ENCODE measurements at regions of chr4 and their contacts with region 1.

Region 1: GRCh38 chr4:107757864-107758476 is 37.9 kb upstream of the PAPSS1 start:
- DNase-seq: no peak
- H3K4me3 ChIP-seq: no peak overlapping the region
- H3K27ac ChIP-seq: no peak overlapping the region
- H3K4me1 ChIP-seq: no peaks in the 10 kb centered on the region; a peak in 1 of 7 replicates
- H3K27me3 ChIP-seq: no peaks in the 10 kb centered on the region
- CTCF ChIP-seq: no peak; a peak in 1 of 4 replicates
- EP300 ChIP-seq: no peak
- POLR2A ChIP-seq: no peak
- RAD21 ChIP-seq: peak in 1 of 2 experiments; percentile 28; a peak in 3 of 4 replicates

Region 2: DNA sequence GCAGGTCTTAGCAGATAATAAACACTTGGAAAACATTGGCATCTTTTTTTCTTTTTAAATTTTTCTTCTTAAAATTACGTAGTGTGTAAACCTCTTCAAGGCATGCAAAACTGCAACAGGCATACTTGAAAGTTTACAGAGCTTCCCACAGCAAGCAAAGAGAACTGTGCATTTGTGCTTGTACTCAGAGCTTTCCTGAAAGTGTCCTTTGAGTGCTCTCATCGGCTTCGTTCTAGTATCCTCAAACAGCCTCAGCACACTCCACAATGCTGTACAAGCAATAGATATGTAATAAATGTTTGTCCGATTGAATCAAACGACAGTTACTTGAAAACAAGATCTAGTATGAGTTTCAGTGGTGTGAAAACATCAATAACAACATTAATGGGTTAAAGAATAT is 265.4 kb before region 1 on chr4:
- CTCF ChIA-PET with region 1: no interaction called
- POLR2A ChIA-PET with region 1: no interaction called
- DNase-seq: no peak
- H3K4me3 ChIP-seq: no peak overlapping the region
- H3K27ac ChIP-seq: no peak overlapping the region
- H3K4me1 ChIP-seq: no peaks in the 10 kb centered on the region
- H3K27me3 ChIP-seq: no peaks in the 10 kb centered on the region
- CTCF ChIP-seq: no peak
- EP300 ChIP-seq: no peak
- POLR2A ChIP-seq: no peak
- RAD21 ChIP-seq: no peak

Region 3: DNA sequence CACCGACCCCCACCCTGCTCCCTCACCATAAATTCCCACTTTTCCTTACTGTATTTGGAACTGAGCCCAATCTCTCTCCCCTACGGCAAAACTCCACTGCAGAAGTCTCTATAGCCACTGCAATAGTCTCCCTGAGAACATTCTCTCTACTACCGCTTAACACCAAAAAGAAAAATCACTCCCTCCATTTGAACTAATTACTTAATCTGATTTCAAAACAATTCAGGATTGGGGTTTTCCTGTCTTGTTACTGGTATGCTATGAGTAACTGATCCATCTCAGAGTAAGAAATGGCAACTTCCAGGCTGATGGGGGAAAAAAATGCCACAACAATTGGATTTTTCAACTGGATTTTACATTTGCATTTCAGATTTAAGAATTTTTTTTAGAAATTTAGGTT is 43.7 kb before region 1 on chr4:
- CTCF ChIA-PET with region 1: no interaction called
- POLR2A ChIA-PET with region 1: no interaction called
- DNase-seq: no peak
- H3K4me3 ChIP-seq: no peak overlapping the region
- H3K27ac ChIP-seq: no peak overlapping the region
- H3K4me1 ChIP-seq: peaks cover 3 to 15% (median 6%) of the 10 kb centered on the region in 4 experiments; a peak in 6 of 7 replicates
- H3K27me3 ChIP-seq: no peaks in the 10 kb centered on the region
- CTCF ChIP-seq: no peak
- EP300 ChIP-seq: no peak
- POLR2A ChIP-seq: no peak
- RAD21 ChIP-seq: no peak

Region 4: DNA sequence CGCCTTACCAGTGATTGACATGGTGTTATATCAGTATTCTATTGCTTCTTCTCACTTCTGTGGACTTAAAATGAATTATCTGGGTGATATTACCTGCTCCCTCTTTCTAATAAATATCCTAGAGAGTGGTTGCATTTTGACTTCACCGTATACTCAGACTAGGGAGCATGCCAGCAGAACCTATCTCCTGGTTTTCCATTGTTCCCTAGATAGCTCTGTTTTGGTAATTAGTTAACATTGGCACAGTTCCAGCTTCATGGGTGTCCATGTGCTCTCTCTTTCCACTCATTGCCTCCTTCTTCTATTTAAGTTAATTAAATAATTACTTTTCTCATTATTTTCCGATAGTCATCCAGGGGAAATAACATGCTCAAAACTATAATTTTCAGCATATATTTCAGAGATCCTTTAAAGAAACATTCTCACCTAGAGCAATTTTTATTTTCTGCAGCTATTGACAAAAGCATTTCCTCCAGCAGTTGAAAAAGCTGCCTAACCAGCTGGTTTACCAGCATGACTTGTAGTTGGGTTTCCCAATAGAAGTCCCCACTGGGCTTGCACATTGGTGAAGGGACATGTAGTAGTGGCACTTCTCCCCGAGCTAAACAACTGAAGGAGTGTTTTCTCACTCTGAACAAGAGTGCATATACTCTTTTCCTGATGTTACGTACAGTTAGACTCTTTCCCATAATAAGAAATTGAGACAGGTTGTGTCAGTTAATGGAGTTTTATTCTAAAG is 10.1 kb before region 1 on chr4:
- CTCF ChIA-PET with region 1: interaction called, 17 read pairs
- POLR2A ChIA-PET with region 1: no interaction called
- DNase-seq: no peak
- H3K4me3 ChIP-seq: no peak overlapping the region
- H3K27ac ChIP-seq: no peak overlapping the region
- H3K4me1 ChIP-seq: no peaks in the 10 kb centered on the region
- H3K27me3 ChIP-seq: no peaks in the 10 kb centered on the region
- CTCF ChIP-seq: no peak
- EP300 ChIP-seq: no peak
- POLR2A ChIP-seq: no peak
- RAD21 ChIP-seq: no peak

Region 5: DNA sequence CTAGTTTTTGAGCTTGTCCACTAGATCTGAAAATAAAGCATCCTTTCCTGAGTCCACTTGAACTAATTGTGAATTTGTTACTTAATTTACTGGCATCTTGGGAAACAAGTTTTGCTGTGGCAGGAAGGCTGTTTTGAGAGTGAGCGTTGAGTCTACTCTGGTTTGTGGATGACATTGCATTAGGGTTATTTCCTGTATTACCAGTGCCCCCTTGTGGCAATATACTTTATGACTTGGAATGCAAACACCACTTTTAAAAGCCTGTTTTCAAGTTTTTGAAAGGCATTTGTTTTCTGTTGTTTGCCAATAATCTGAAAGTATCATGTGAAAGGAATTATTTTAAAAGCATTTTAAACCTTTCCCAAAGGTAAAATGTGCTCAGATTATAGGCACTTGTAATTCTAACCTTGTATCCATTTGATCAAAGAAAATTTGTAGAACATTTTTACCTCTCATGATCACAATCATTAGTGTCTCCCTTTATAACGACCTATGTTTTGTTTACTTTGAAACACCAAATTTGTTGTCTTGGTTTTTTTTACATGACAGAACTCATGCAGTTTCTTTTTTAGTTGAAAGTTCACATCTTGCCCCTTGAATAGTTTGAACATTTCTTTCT is 155.4 kb after region 1 on chr4:
- CTCF ChIA-PET with region 1: interaction called, 38 read pairs
- POLR2A ChIA-PET with region 1: interaction called, 3 read pairs
- DNase-seq: no peak
- H3K4me3 ChIP-seq: no peak overlapping the region
- H3K27ac ChIP-seq: no peak overlapping the region
- H3K4me1 ChIP-seq: no peaks in the 10 kb centered on the region
- H3K27me3 ChIP-seq: no peaks in the 10 kb centered on the region
- CTCF ChIP-seq: peak in 2 of 3 experiments; percentile 68 to 71; a peak in 2 of 4 replicates
- EP300 ChIP-seq: no peak
- POLR2A ChIP-seq: no peak
- RAD21 ChIP-seq: peak; percentile 93

Region 6: GRCh38 chr4:108030332-108030731 is 272.4 kb after region 1 on chr4:
- CTCF ChIA-PET with region 1: no interaction called
- POLR2A ChIA-PET with region 1: no interaction called
- DNase-seq: peak in 1 of 2 experiments; percentile 25
- H3K4me3 ChIP-seq: no peak overlapping the region
- H3K27ac ChIP-seq: no peak overlapping the region
- H3K4me1 ChIP-seq: no peaks in the 10 kb centered on the region
- H3K27me3 ChIP-seq: no peaks in the 10 kb centered on the region
- CTCF ChIP-seq: peak; percentile 39 to 77 (median 66)
- EP300 ChIP-seq: 0 out of 3 replicates have a peak, but pooled peaks of 1 of the 2 experiments have one; percentile 5
- POLR2A ChIP-seq: no peak
- RAD21 ChIP-seq: peak; percentile 84 to 88